Common myeloid progenitor, CD34-positive (primary cell): ENCODE measurements at regions of chr1 and their contacts with region 1.

Region 1: DNA sequence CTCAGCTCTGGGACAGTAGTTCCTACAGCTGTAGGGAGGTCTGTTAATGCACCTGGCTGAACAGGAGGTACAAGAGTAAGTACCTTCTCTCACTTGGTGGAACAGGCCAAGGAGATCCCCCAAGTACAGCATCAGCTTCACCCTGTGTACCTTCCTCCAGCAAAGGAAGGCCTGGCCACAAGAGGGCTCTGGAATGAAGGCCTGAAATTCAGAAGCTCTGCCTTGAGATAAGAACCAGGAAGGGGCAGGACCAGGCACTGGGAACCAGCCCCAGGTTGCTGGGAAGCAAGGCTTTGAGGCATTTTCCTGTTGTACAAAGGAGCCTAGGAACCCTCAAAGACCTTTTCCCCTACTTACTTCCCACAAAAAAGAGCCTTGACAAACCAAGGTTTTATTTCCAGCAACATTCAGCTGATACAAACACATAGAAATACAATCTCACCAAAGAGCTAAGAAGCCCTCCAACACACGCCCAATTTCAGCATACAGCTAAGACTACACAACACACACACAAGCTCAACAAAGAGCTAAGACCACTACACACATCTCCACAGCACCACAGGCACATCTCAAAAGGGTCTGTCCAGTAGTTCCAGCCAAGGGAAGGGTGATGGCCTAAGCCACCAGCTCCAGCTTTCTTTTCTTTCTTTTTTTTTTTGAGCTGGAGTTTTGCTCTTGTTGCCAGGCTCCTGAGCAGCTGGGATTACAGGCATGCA is 23.5 kb downstream of the F11R start:
- DNase-seq: peak; percentile 63 to 74 (median 73)
- H3K4me3 ChIP-seq: no peak overlapping the region
- H3K27ac ChIP-seq: peak overlapping the region in 1 of 2 experiments; percentile 52
- H3K4me1 ChIP-seq: peaks cover 0 to 6% (median 5%) of the 10 kb centered on the region in 4 experiments
- H3K27me3 ChIP-seq: no peaks in the 10 kb centered on the region

Region 2: DNA sequence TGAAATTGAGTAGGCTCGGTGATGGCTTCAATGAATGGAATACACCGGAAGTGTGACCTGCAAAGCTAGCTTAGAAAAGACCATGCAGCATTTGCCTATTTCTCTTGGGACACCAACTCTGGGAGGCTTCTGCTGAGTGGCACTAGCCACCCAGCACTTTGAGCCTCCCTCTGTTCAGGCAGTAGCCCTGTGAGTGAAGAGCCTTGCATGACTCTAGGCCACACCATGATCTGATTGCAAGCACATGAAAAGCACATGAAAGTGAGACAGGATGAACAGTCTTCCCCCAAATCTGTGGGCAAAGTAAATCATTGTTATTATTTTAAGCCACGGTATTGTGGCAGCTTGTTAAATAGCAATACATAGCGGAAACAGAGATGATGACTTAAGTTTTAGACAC is 288.7 kb before region 1 on chr1:
- CTCF ChIA-PET with region 1: no interaction called
- POLR2A ChIA-PET with region 1: no interaction called
- DNase-seq: no peak
- H3K4me3 ChIP-seq: peak overlapping the region in 3 of 7 experiments; percentile 13 to 79 (median 20)
- H3K27ac ChIP-seq: no peak overlapping the region
- H3K4me1 ChIP-seq: peaks cover 64 to 99% (median 80%) of the 10 kb centered on the region in 4 experiments
- H3K27me3 ChIP-seq: no peaks in the 10 kb centered on the region

Region 3: GRCh38 chr1:160971618-160972056 is 25.8 kb before region 1 on chr1:
- CTCF ChIA-PET with region 1: no interaction called
- POLR2A ChIA-PET with region 1: no interaction called
- DNase-seq: peak in 1 of 3 donors; percentile 16
- H3K4me3 ChIP-seq: no peak overlapping the region
- H3K27ac ChIP-seq: no peak overlapping the region
- H3K4me1 ChIP-seq: no peaks in the 10 kb centered on the region
- H3K27me3 ChIP-seq: no peaks in the 10 kb centered on the region

Region 4: DNA sequence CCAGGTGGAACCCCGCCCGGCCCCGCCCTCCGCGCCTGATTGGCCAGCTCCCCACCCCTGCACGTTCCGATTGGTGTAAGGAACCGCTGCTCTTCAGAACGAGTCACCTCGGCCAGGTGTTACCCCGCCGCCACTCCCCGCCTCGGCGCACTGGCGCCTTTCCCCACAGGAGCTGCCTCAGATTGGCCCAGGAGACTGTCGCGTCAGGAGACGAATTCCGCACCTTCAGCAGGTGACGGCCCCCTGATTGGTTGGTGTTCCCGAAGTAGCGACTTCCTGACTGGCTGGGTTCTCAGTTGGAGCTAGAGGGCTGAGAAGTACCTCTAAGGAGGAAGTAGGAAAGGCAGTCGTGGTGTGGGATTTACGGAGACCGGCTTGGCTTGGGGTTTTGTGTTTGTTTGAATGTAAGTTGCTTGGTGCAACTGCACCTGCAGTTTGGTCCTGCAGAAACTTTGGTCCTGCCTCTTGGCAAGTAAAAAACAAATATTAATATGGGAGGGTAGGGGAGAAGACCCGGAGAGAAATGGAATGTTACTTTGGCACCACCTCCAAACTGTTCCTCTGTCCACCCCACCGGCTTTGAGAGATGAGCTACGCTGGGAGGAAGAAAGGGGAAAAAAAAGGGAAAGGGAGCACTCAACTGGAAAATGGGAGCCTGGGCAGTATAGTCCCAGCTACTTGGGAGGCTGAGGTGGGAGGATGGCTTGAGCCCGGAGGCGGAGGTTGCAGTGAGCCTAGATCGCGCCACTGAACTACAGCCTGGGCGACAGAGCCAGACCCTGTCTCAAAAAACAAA is 23.9 kb after region 1 on chr1:
- CTCF ChIA-PET with region 1: interaction called, 120 read pairs
- POLR2A ChIA-PET with region 1: interaction called, 5 read pairs
- DNase-seq: peak; percentile 78 to 92 (median 87)
- H3K4me3 ChIP-seq: peak overlapping the region; percentile 71 to 96 (median 83)
- H3K27ac ChIP-seq: peak overlapping the region; percentile 25 to 74
- H3K4me1 ChIP-seq: peaks cover 15 to 43% (median 34%) of the 10 kb centered on the region in 4 experiments
- H3K27me3 ChIP-seq: no peaks in the 10 kb centered on the region

Region 5: GRCh38 chr1:161045750-161046571 is 48.5 kb after region 1 on chr1 and contains the start of gene USF1:
- CTCF ChIA-PET with region 1: interaction called, 56 read pairs
- POLR2A ChIA-PET with region 1: interaction called, 8 read pairs
- DNase-seq: peak; percentile 97 to 98 (median 98)
- H3K4me3 ChIP-seq: peak within 1 kb of the TSS; percentile 75 to 97 (median 91)
- H3K27ac ChIP-seq: peak within 1 kb of the TSS; percentile 95 to 97
- H3K4me1 ChIP-seq: peaks cover 8 to 31% (median 20%) of the 10 kb centered on the region in 4 experiments
- H3K27me3 ChIP-seq: no peaks in the 10 kb centered on the region

Region 6: GRCh38 chr1:161071886-161072371 is 74.4 kb after region 1 on chr1:
- CTCF ChIA-PET with region 1: interaction called, 73 read pairs
- POLR2A ChIA-PET with region 1: interaction called, 6 read pairs
- DNase-seq: peak; percentile 71 to 75 (median 74)
- H3K4me3 ChIP-seq: no peak overlapping the region
- H3K27ac ChIP-seq: no peak overlapping the region
- H3K4me1 ChIP-seq: peaks cover 12 to 67% (median 50%) of the 10 kb centered on the region in 4 experiments
- H3K27me3 ChIP-seq: no peaks in the 10 kb centered on the region

Region 7: DNA sequence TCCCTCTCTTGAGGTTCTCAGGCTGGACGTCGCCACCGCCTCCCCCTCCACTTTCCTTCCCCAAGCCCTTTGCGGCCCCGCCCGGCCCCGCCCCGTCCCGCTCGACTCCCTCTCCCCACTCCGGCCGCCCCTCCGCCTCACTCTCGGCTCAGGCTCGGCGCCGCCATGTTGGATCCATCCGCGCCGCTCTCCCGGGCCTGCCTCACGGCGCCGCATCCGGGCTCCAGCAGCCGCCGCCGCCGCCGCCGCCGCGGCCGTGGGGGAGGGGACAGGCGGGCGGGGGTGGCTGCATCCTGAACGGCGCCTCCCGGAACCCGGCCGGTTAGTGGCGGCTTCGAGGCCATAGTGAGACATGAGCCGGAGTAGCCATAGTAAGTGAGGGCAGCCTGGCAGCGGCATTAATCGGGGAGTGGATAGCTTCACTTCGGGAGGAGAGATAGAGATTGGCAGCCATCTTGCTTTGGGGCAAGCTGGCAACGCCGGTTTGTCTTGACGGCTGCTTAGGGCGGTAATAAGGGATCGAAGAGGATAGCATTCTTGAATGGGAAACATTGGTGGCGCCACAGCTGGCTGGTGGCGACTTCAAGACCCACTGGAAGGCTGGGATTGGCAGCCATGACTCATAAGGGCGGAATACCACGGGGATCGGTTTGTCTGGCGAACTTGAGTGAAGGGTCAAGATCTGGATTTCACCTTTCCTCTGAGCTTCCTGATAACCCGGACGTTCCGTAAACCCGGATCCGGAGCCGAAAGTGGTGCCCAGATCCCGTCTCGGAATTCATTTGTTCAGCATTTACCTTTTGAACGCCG is 135.1 kb after region 1 on chr1 and contains the start of gene DEDD:
- CTCF ChIA-PET with region 1: interaction called, 26 read pairs
- POLR2A ChIA-PET with region 1: no interaction called
- DNase-seq: peak; percentile 97 to 98 (median 97)
- H3K4me3 ChIP-seq: peak within 1 kb of the TSS; percentile 82 to 97 (median 95)
- H3K27ac ChIP-seq: peak within 1 kb of the TSS; percentile 85 to 92
- H3K4me1 ChIP-seq: peaks cover 10 to 29% (median 21%) of the 10 kb centered on the region in 4 experiments
- H3K27me3 ChIP-seq: no peaks in the 10 kb centered on the region